ENCODE measurements at regions of chr9 and their contacts with region 1.

Region 1: DNA sequence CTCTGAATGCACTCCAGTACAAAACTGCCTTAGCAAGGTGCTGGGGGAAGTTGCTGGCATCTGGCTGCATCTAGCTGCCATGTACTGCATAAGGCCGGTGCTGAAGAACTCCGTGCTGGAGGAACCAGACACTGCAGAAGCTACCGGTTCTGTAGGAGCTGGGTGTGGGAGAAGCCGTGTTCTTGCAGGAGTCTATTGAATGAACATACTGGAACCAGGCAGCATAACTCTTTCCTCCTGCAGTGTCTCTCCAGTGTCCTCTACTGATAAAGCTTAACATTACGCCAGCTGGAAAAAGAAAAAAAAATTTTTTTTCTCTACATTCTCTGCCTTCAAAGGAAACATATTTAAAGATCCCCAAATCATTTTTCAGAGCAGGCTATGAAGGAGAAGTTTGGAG is 38.5 kb downstream of the VPS13A start:
- DNase-seq: no peak
- H3K4me3 ChIP-seq: no peak overlapping the region
- H3K27ac ChIP-seq: no peak overlapping the region
- H3K4me1 ChIP-seq: peaks cover 0 to 16% (median 11%) of the 10 kb centered on the region in 4 donors
- H3K27me3 ChIP-seq: no peaks in the 10 kb centered on the region
- CTCF ChIP-seq: peak in 1 of 3 experiments; percentile 37
- EP300 ChIP-seq: no peak
- POLR2A ChIP-seq: no peak

Region 2: DNA sequence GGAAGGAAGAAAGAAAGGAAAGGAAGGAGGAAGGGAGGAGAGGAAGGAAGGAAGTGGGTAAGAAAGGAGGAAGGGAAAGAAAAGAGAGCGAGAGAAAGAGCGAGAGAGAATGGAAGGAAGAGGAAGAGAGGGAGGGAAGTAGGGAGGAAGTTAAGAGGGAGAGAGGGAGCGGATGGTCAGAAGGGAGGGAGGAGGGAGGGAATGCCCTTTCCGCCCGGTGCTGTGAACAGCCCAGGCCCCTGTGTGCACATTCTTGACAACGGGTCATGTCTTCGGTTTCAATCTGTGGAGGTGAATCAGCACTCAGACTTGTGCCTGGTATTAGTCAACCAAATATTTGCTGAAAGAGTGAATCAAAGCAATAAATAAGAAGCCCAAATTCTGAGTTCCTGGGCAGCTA is 349.2 kb before region 1 on chr9:
- intact Hi-C with region 1: no loop called
- DNase-seq: no peak
- H3K4me3 ChIP-seq: no peak overlapping the region
- H3K27ac ChIP-seq: peak overlapping the region; percentile 77 to 91 (median 88)
- H3K4me1 ChIP-seq: peaks cover 0 to 93% (median 77%) of the 10 kb centered on the region in 4 donors
- H3K27me3 ChIP-seq: no peaks in the 10 kb centered on the region
- CTCF ChIP-seq: no peak
- EP300 ChIP-seq: no peak
- POLR2A ChIP-seq: no peak

Region 3: DNA sequence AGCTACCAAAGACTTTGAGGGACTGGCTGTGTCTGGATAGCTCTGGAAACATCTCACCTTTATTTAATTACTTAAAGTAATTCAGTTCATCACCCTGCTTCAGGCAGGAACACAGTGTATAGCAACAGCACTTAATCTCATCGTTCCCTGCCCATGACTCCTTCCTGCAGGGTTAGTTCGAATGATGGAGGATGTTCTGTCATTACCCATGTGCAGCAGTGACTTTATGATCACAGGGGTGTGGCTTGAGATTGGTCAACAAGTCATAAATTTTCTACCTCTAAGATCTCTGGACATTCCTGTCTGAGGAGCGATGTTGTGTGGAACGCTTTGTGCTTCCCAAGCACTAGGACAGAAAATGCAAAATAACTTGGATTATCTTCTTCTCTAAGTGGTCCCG is 272.8 kb before region 1 on chr9:
- intact Hi-C with region 1: no loop called
- DNase-seq: no peak
- H3K4me3 ChIP-seq: no peak overlapping the region
- H3K27ac ChIP-seq: no peak overlapping the region
- H3K4me1 ChIP-seq: no peaks in the 10 kb centered on the region
- H3K27me3 ChIP-seq: no peaks in the 10 kb centered on the region
- CTCF ChIP-seq: no peak
- EP300 ChIP-seq: no peak
- POLR2A ChIP-seq: no peak

Region 4: DNA sequence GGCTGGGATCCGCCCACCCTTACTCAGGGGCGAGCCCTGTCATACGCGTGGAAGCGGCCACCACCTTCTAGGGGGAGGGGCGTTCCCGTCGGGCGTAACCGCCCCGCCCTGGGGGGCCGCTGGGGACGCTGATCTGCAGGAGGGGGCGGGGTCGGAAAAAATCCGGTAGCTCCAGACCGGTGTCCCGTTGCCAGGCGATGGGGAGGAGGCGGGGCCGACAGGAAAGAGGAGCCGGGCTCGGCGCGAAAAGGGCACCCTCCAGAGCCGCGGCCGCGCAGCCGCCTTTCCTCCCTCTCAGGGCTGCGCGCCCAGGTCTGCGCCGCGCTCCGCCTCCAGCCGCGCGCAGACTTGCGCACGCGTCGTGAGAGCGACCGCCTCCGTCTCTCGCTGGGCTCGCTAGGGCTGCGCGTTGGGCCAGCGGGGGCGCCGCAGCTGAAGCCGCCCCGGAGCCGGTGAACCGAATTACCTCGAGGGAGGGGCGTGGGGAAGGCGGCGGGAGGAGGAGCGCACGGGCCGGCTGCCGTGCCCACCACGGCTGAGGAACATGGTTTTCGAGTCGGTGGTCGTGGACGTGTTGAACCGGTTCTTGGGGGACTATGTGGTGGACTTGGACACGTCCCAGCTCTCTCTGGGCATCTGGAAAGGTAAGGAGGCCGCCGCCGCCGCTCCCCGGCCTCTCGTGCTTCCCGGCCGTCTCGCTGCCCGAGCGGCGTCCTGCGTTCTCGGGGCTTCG is 38.5 kb before region 1 on chr9 and contains the start of gene VPS13A:
- intact Hi-C with region 1: loop called (anchors 5 kb)
- DNase-seq: peak; percentile 96
- H3K4me3 ChIP-seq: peak within 1 kb of the TSS; percentile 74 to 92 (median 87)
- H3K27ac ChIP-seq: peak within 1 kb of the TSS; percentile 88 to 93 (median 90)
- H3K4me1 ChIP-seq: peaks cover 0 to 24% (median 19%) of the 10 kb centered on the region in 4 donors
- H3K27me3 ChIP-seq: no peaks in the 10 kb centered on the region
- CTCF ChIP-seq: peak; percentile 12 to 26 (median 22)
- EP300 ChIP-seq: no peak
- POLR2A ChIP-seq: no peak
- total RNA-seq, gene VPS13A: 33.4 to 47.8 (median 40.7) TPM

Region 5: DNA sequence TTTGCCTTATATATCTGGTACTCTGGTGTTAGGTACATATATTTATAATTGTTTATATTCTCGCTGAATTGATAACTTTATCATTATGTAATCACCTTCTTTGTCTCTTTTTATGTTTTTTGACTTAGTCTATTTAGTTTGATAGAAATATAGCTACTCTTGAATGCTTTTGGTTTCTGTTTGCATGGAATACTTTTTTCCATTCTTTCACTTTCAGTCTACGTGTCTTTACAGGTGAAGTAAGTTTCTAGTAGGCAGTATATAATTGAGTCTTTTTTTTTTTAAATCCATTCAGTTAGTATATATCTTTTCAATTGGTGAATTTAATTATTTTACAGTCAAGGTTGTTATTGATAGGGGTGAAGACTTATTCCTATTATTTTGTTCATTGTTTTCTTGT is 1212.8 kb after region 1 on chr9:
- intact Hi-C with region 1: no loop called
- DNase-seq: no peak
- H3K4me3 ChIP-seq: no peak overlapping the region
- H3K27ac ChIP-seq: no peak overlapping the region
- H3K4me1 ChIP-seq: no peaks in the 10 kb centered on the region
- H3K27me3 ChIP-seq: no peaks in the 10 kb centered on the region
- CTCF ChIP-seq: no peak
- EP300 ChIP-seq: no peak
- POLR2A ChIP-seq: no peak

Measured in esophagus muscularis mucosa (tissue), 4 donors.